ENCODE measurements at regions of chr9 and their contacts with region 1.

Region 1: GRCh38 chr9:97890038-97890437 is 32.3 kb downstream of the TRMO start:
- DNase-seq: peak; percentile 65
- CTCF ChIP-seq: peak; percentile 66

Region 2: DNA sequence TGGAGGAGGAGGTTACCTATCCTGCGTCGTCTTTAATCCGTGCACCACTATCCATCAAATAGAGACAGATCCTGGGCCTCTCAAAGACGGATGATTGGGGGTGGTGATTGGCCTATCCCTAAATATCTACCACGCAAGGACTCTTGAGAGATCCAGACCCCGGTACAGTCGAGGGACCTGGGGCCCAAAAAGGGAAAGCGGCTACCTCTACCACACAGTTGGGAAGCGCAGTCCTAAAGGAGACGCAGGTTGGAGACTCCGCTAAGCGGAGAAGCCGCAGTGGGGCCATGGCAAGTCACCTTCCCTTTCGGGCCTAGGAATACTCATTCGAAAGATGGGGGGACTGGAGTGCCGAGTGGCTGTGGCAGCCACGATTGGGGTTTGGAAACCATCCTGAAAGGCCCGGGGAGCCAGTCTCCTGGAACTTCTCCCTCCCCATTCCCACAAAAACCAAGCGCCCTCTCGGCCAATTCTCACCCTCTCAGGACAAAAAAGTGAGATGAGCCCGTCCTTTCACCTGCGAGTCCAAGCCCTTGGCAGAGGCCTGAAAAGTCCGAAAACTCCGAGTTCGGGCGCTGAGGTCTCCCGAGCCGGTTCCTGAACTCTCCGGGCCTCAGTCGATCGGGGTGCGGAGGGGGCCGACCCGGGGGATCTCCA is 37.5 kb before region 1 on chr9:
- CTCF ChIA-PET with region 1: no interaction called
- POLR2A ChIA-PET with region 1: no interaction called
- DNase-seq: no peak
- CTCF ChIP-seq: no peak

Region 3: DNA sequence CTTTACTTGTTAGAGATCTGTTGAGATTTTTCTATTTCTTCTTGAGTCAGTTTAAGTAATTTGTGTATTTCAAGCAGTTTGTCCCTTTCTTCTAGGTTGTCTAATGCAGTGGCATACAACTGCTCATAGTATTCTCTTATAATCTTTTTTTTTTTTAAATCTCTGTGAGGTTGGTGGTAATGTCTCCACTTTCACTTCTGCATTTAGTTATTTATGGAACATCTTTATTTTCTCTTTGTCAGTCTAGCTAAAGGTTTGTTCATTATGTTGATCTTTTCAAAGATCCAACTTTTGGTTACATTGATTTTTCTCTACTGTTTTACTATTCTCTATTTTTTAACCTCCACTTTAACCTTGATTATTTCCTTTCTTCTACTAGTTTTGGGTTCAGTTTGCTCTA is 23.2 kb before region 1 on chr9:
- CTCF ChIA-PET with region 1: interaction called, 11 read pairs
- POLR2A ChIA-PET with region 1: no interaction called
- DNase-seq: no peak
- CTCF ChIP-seq: no peak

Region 4: GRCh38 chr9:97873877-97874276 is 16.2 kb before region 1 on chr9:
- CTCF ChIA-PET with region 1: interaction called, 12 read pairs
- POLR2A ChIA-PET with region 1: no interaction called
- DNase-seq: no peak
- CTCF ChIP-seq: no peak

Region 5: GRCh38 chr9:97900738-97901565 is 10.9 kb after region 1 on chr9:
- CTCF ChIA-PET with region 1: interaction called, 111 read pairs
- POLR2A ChIA-PET with region 1: no interaction called
- DNase-seq: peak; percentile 54
- CTCF ChIP-seq: peak; percentile 77

Region 6: GRCh38 chr9:97906236-97906831 is 16.3 kb after region 1 on chr9:
- CTCF ChIA-PET with region 1: interaction called, 111 read pairs
- POLR2A ChIA-PET with region 1: no interaction called
- DNase-seq: no peak
- CTCF ChIP-seq: no peak